Panc1 (cell line): ENCODE measurements at regions of chr20 and their contacts with region 1.

Region 1: DNA sequence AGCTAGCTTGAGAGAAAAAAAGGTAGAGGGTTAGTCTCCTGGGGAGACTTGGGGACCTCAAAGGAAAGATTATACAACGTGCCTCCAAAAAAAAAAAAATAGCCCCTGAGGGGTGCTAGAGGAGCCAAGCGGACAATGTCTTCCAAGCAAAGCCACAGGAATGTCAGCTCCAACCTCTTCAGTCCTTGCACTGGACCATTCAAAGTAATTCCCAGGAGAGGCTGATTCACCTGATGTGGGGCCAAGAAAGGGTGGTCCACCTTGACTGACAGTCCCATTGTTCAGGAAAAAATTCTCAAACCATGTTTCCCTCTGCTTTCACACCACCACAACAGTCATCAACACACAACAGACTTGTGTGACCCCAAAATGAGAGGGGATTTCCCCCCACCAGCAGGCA is 30.7 kb downstream of the ASIP start:
- DNase-seq: no peak
- ATAC-seq: no peak
- H3K4me3 ChIP-seq: no peak overlapping the region
- H3K27ac ChIP-seq: no peak overlapping the region
- H3K4me1 ChIP-seq: no peaks in the 10 kb centered on the region
- H3K27me3 ChIP-seq: no peaks in the 10 kb centered on the region
- CTCF ChIP-seq: no peak

Region 2: DNA sequence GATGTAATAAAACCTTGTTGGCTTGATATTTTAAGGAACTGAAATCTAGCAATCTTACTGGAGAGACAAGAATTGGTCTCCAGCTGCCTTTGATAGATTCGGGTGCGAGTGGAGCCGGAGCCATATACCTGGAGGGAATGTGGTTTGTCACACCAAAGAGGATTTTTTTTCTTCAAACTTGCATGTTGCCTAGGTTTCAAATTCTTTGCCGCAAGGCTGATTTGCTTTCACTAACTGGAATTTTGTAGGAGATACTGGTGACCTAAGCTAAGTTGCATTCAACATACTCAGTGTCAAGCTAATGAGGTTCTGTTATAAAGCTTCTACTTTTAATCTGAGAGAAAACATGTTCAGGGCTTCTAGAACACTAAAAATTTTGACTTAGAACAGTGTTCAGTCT is 70.4 kb before region 1 on chr20:
- CTCF ChIA-PET with region 1: no interaction called
- POLR2A ChIA-PET with region 1: interaction called, 13 read pairs
- in situ Hi-C with region 1: no loop called
- intact Hi-C with region 1: no loop called
- DNase-seq: no peak
- ATAC-seq: no peak
- H3K4me3 ChIP-seq: no peak overlapping the region
- H3K27ac ChIP-seq: no peak overlapping the region
- H3K4me1 ChIP-seq: no peaks in the 10 kb centered on the region
- H3K27me3 ChIP-seq: peaks cover 19% of the 10 kb centered on the region; the same call in 1 of the 2 replicates
- CTCF ChIP-seq: no peak